ENCODE measurements at regions of chr15 and their contacts with region 1.

Region 1: DNA sequence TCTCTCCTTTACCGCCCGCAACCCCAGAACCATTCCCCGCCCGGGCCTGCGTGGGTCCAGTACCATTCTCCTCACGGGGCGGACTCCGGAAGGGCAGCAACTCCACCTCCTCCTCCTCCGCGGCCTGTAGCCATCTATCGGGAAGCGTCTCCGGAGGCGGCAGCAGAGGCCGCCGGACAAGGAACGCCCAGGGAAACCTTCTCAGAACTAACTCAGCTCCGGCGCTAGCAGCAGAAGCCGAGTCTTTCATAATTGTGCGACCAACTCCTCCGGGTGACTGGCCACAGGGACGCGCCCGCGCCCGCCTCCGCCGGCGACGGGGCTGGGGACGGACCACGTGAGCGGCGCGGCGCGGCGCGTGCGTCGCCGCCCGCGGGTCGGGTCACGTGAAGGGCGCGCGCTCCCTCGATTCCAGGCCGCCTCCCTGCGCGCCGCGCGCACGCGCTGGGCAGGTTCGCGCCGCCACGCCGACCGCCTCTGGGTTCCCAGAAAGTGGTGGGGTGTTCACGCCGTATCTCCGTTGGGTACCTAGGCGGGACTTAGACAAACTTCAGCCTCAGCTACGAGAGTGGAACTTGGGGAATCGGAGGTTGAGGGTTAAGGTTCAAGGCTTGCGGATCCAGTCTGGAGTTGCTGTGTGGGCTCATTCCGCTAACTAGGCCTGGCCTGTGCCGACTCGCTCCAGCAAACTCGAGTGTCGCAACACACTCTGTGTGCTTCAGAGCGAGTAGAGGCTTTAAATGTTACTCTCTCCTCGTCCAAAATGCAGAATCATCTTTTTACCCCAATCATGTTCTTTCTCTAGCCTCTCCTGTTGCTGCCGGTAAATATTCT is at the start of gene TRPM7:
- DNase-seq: peak; percentile 66
- ATAC-seq: peak; percentile 96
- H3K4me3 ChIP-seq: peak within 1 kb of the TSS; percentile 75 to 81
- H3K27ac ChIP-seq: peak within 1 kb of the TSS; percentile 94
- H3K4me1 ChIP-seq: peaks cover 15% of the 10 kb centered on the region
- H3K27me3 ChIP-seq: no peaks in the 10 kb centered on the region
- CTCF ChIP-seq: no peak
- total RNA-seq, gene TRPM7: 44.9 TPM

Region 2: GRCh38 chr15:50463423-50464358 is 223.0 kb before region 1 on chr15:
- CTCF ChIA-PET with region 1: no interaction called
- POLR2A ChIA-PET with region 1: no interaction called
- in situ Hi-C with region 1: no loop called
- intact Hi-C with region 1: no loop called
- DNase-seq: no peak
- ATAC-seq: no peak
- H3K4me3 ChIP-seq: no peak overlapping the region
- H3K27ac ChIP-seq: no peak overlapping the region
- H3K4me1 ChIP-seq: peaks cover 10% of the 10 kb centered on the region
- H3K27me3 ChIP-seq: no peaks in the 10 kb centered on the region
- CTCF ChIP-seq: no peak

Region 3: DNA sequence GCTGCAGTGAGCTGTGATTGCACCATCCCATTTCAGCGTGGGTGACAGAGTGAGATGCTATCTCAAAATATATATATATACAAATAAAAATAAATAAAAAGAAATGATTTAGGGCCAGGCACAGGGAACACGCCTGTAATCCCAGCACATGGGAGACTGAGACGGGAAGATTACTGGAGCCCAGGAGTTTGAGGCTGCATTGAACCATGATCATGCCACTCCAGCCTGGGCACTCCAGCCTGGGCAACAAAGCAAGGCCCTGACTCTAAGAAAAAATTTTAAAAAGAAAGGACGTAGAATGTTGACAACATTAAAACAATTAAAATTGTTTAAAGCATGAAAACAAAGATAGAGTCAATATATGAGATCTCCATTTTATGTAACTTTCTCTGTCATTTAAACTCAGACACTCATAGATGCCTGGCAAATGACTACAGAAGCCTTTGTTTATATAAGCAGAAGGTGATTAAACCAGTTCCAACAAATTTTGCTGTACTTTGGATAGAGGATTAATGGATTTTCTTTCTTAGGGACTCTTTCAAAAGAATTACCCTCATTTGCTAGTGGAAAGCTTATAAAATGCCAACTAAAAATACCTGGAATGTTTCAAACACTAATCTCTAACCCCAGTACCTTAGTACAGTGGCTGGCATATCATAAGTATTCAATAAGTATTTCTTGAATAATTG is 10.6 kb after region 1 on chr15:
- CTCF ChIA-PET with region 1: no interaction called
- POLR2A ChIA-PET with region 1: interaction called, 13 read pairs
- in situ Hi-C with region 1: no loop called
- intact Hi-C with region 1: no loop called
- DNase-seq: no peak
- ATAC-seq: no peak
- H3K4me3 ChIP-seq: no peak overlapping the region
- H3K27ac ChIP-seq: no peak overlapping the region
- H3K4me1 ChIP-seq: no peaks in the 10 kb centered on the region
- H3K27me3 ChIP-seq: no peaks in the 10 kb centered on the region
- CTCF ChIP-seq: no peak

Region 4: GRCh38 chr15:50758762-50759161 is 72.1 kb after region 1 on chr15:
- CTCF ChIA-PET with region 1: no interaction called
- POLR2A ChIA-PET with region 1: interaction called, 11 read pairs
- in situ Hi-C with region 1: no loop called
- intact Hi-C with region 1: no loop called
- DNase-seq: no peak
- ATAC-seq: no peak
- H3K4me3 ChIP-seq: no peak overlapping the region
- H3K27ac ChIP-seq: no peak overlapping the region
- H3K4me1 ChIP-seq: peaks cover 4% of the 10 kb centered on the region; the same call in 1 of the 2 replicates
- H3K27me3 ChIP-seq: no peaks in the 10 kb centered on the region
- CTCF ChIP-seq: no peak

Region 5: DNA sequence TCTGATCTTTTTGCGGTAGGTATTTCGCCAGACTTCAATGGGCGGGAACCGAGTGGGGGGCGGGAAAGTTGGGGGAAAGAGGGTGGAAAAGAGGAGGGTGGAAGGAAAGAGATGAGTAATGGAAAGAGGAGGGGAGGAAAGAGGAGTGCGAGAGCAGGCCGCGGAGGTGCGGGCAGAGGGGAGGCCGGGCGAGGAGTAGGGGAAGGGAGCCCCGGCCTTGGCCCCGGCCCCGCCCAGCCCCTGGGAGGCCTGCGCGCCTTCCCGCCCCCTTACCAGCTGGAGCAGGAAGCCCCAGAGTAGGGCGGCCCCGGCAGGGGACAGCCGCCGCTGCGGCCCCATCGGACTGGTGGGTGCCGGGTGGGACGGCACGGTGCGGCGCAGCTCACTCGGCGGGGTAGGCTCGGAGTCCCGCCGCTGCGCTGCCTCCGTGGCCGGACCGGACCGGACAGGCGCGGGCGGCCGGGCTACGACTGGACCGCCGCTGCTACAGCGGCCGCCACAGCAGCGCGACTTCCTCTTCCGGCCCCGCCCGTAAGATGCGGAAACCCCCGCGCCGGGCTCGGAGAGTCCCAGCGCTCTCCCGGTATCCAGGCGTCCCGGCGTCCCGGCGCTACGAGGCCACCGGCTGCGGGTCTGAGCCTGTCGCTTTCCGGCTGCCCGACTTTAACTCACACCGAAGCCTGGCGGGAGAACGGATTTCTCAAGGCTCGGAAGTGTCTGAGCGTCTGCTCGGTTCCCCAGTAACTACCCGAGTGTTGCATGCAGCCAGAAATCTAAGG is 78.7 kb after region 1 on chr15 and contains the start of gene SPPL2A:
- CTCF ChIA-PET with region 1: no interaction called
- POLR2A ChIA-PET with region 1: interaction called, 10 read pairs
- in situ Hi-C with region 1: no loop called
- intact Hi-C with region 1: no loop called
- DNase-seq: no peak
- ATAC-seq: peak; percentile 99
- H3K4me3 ChIP-seq: peak within 1 kb of the TSS; percentile 77 to 91
- H3K27ac ChIP-seq: peak within 1 kb of the TSS; percentile 98
- H3K4me1 ChIP-seq: peaks cover 14% of the 10 kb centered on the region; the same call in 1 of the 2 replicates
- H3K27me3 ChIP-seq: no peaks in the 10 kb centered on the region
- CTCF ChIP-seq: no peak
- total RNA-seq, gene SPPL2A: 154 TPM